Activated naive CD4-positive, alpha-beta T cell treated with anti-CD3 and anti-CD28 coated beads for 36 hours (primary cell): ENCODE measurements at regions of chr4 and their contacts with region 1.

Region 1: GRCh38 chr4:48127682-48128394 is 6.2 kb downstream of the TXK start:
- DNase-seq: peak; percentile 95
- H3K4me3 Mint-ChIP-seq: peak overlapping the region; percentile 51
- H3K27ac Mint-ChIP-seq: peak overlapping the region; percentile 99
- H3K4me1 Mint-ChIP-seq: peaks cover 80% of the 10 kb centered on the region
- H3K27me3 Mint-ChIP-seq: no peaks in the 10 kb centered on the region

Region 2: GRCh38 chr4:47873877-47874541 is 253.8 kb before region 1 on chr4:
- CTCF ChIA-PET with region 1: no interaction called
- intact Hi-C with region 1: loop called (anchors 5 kb)
- DNase-seq: no peak
- H3K4me3 Mint-ChIP-seq: no peak overlapping the region
- H3K27ac Mint-ChIP-seq: peak overlapping the region; percentile 16
- H3K4me1 Mint-ChIP-seq: peaks cover 11% of the 10 kb centered on the region
- H3K27me3 Mint-ChIP-seq: no peaks in the 10 kb centered on the region

Region 3: GRCh38 chr4:48065587-48066052 is 62.2 kb before region 1 on chr4:
- CTCF ChIA-PET with region 1: interaction called, 3 read pairs
- intact Hi-C with region 1: loop called (anchors 1 kb)
- DNase-seq: peak; percentile 48
- H3K4me3 Mint-ChIP-seq: no peak overlapping the region
- H3K27ac Mint-ChIP-seq: peak overlapping the region; percentile 44
- H3K4me1 Mint-ChIP-seq: peaks cover 36% of the 10 kb centered on the region
- H3K27me3 Mint-ChIP-seq: no peaks in the 10 kb centered on the region

Region 4: DNA sequence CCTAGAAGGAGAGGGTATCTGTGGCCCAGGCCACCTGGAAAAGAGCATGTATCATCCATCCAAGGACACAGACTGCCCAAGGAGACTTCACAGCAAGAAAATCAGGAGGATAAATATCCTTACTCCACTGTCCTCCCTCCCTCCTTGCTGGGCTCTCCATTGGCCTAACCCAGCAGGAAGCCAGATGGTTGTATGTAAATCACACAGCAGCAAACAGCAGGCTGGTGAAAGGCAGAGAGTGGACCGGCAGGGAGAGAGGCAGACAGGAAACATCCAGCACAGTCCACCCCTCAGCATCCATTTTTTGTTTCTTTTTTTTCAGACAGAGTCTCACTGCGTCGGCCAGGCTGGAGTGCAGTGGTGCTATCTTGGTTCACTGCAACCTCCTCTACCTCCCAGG is 11.3 kb before region 1 on chr4:
- CTCF ChIA-PET with region 1: interaction called, 16 read pairs
- intact Hi-C with region 1: no loop called
- DNase-seq: no peak
- H3K4me3 Mint-ChIP-seq: no peak overlapping the region
- H3K27ac Mint-ChIP-seq: peak overlapping the region; percentile 14
- H3K4me1 Mint-ChIP-seq: peaks cover 72% of the 10 kb centered on the region
- H3K27me3 Mint-ChIP-seq: no peaks in the 10 kb centered on the region

Region 5: DNA sequence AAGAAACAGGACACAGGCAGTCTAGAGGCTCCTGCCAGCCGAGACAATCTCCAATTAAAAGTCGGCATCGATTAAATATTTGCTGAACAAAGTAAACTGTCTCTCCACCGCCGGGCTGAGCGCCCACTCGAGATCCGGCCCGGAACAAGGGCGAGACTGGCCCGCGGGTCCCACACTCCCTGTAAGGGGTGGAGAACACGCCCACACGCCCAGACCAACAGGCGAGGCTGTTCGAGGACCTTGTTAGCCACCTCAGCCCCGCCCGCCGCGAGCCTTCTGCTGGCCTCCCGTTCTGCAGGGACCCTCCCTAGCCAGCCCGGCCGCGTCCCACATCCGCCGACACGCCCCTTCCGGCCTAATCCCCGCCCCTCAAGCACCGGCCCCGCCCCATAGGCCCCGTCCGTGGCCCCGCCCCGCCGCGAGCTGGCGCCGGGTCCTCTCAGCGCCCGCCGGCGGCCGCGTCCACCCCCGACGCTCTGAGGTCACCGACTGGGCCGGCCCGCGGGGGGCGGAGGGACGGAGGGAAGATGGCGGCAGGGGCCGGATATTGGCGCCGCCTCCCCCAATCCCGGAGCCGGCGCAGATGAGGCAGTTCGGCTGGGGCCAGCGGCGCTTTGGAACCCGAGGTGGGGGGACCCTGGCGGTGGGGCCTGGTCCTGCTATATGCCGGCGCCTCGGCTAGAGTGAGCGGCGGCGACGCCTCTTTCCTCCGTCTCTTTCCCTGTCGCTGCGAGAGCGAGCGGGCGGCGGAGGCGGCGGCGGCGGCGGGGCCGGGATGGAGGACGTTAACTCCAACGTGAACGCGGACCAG is 213.3 kb after region 1 on chr4 and contains the start of gene SLAIN2:
- CTCF ChIA-PET with region 1: interaction called, 3 read pairs
- intact Hi-C with region 1: loop called (anchors 1 kb)
- DNase-seq: peak; percentile 98
- H3K4me3 Mint-ChIP-seq: peak within 1 kb of the TSS; percentile 97
- H3K27ac Mint-ChIP-seq: peak within 1 kb of the TSS; percentile 97
- H3K4me1 Mint-ChIP-seq: peaks cover 62% of the 10 kb centered on the region
- H3K27me3 Mint-ChIP-seq: no peaks in the 10 kb centered on the region
- total RNA-seq, gene SLAIN2: 39.7 to 42.6 TPM

Region 6: GRCh38 chr4:48681856-48682255 is 554.0 kb after region 1 on chr4:
- CTCF ChIA-PET with region 1: no interaction called
- intact Hi-C with region 1: loop called (anchors 5 kb)
- DNase-seq: peak; percentile 51
- H3K4me3 Mint-ChIP-seq: no peak overlapping the region
- H3K27ac Mint-ChIP-seq: peak overlapping the region; percentile 63
- H3K4me1 Mint-ChIP-seq: peaks cover 38% of the 10 kb centered on the region
- H3K27me3 Mint-ChIP-seq: no peaks in the 10 kb centered on the region

Region 7: DNA sequence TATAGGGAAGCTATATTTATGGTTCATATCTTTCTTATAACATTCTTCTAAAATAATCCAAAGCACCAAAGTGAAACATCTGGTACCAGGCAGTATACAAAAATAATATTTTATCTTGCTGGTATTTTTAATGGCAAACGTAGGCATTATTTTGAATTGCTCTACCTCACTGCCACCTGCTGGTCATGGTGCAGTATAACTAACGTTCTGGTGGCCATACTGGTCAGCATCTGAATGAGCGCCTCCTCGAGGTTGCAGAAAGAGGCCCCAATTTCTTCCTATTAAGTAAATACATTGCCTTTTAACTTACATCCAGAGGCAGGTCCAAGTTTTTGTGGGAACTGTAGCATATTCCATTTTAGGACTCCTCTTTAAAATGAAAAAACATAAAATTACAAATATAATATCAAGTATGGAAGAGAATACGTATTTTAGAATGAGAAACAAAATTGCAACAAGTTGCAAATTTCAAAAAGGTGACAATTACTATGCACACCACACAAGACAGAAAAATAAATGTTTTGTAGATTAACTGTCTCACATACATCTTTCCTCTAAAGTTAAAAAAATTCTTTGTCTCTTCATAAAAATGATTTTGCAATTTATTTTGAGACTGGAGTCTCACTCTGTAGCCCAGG is 835.3 kb after region 1 on chr4:
- CTCF ChIA-PET with region 1: no interaction called
- intact Hi-C with region 1: loop called (anchors 5 kb)
- DNase-seq: peak; percentile 89
- H3K4me3 Mint-ChIP-seq: no peak overlapping the region
- H3K27ac Mint-ChIP-seq: no peak overlapping the region
- H3K4me1 Mint-ChIP-seq: no peaks in the 10 kb centered on the region
- H3K27me3 Mint-ChIP-seq: no peaks in the 10 kb centered on the region